Posterior vena cava (tissue), 2 donors: ENCODE measurements at regions of chr7 and their contacts with region 1.

Region 1: DNA sequence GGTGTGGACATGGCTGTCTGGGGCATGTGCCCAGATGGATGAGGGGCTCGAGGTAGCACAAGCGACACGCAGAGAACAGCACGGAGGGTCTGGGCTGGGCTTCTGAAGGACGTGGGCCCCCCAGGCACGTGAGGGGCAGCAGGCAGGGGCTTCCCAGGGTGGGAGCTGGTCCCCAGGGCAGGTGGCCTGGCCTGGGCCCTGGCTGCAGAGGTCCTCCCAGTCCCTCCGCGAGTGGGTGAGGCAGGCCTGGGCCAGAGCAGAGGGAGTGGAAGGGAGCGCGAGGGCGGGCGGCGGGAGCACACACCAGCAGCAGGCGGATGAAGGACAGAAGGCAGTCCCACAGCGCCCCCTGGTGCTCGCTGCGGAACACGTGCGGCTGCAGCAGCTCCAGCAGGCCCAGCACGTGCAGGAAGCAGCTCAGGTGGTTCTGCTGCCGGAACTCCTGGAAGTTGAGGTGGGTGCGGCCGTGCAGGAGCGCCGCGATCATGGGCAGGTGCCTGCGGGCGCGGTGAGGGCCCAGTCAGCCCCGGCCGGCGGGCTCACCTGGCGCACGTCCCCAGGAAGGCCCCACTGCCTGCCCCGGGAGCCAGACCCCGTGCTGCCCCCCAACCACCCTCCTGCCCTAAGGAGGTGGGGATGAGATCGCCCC is 14.7 kb upstream of the MICALL2 start:
- DNase-seq: peak; percentile 97

Region 2: DNA sequence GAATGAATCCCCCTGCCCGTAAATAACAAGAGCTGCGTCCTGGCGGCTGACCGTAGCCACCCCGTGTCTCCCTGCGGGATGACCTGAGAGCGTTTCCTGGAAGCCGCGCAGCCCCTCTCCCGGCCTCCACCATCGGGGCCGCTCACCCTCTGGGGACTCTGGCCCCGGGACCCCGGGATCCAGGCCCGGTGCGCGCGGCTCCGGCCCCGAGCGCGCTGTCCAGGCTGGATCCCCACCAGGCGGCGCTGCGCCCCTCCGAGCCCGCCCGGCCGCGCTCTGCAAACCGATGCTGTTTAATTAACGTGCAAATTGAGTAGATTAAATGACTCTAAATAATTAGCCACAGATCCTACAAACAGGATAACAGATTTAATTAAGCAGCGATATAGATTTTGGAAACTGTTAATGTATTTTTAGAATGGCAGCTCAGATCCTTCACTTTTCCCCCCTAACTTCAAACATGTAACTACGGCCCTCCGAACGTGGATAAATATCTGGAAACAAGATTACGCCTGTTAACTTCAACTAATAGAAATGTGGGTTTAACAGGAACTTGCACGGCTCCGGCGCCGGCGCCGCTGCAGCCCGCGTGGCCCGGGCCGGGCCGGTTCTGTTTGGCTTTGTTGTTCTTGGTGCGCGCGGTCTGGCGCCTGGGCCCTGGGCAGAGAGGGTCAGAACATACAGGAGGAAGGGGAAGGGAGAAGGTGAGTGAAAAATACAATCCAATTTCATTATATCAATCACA is 248.4 kb before region 1 on chr7:
- intact Hi-C with region 1: loop called in 1 of 2 experiments (anchors 5 kb)
- DNase-seq: no peak

Region 3: GRCh38 chr7:1432411-1433082 is 41.4 kb before region 1 on chr7:
- intact Hi-C with region 1: loop called in 1 of 2 experiments (anchors 5 kb)
- DNase-seq: peak; percentile 93

Region 4: GRCh38 chr7:1558181-1558811 is 84.3 kb after region 1 on chr7:
- intact Hi-C with region 1: no loop called
- DNase-seq: no peak